Heart left ventricle (tissue), 16 donors: ENCODE measurements at regions of chrX and their contacts with region 1.

Region 1: DNA sequence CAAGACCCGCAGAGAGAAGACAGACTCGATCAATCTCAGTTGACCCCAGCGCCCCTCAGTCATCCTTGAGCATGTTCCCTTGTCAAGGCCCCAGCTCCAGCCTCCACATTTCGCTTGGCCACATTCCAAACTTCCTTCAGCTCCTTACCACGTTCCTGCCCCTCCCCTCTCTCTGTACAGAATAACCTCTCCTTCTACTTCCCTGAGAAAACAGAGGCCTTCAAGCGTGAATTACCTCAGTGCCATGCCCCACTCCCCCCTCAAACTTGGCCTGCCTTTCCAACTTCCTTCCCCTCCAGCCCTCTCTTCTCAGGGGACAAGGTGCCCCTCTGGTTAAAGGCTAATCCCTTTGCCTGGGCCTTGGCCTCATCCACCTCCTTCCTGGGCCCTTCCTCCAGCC is 3.2 kb upstream of the RIPPLY1 start:
- DNase-seq: no peak
- ATAC-seq: no peak
- H3K4me3 ChIP-seq: no peak overlapping the region
- H3K27ac ChIP-seq: no peak overlapping the region
- H3K4me1 ChIP-seq: no peaks in the 10 kb centered on the region
- H3K27me3 ChIP-seq: no peaks in the 10 kb centered on the region
- CTCF ChIP-seq: no peak
- POLR2A ChIP-seq: no peak

Region 2: GRCh38 chrX:106935175-106935574 is 28.8 kb after region 1 on chrX:
- intact Hi-C with region 1: no loop called
- DNase-seq: no peak
- ATAC-seq: no peak
- H3K4me3 ChIP-seq: no peak overlapping the region
- H3K27ac ChIP-seq: no peak overlapping the region
- H3K4me1 ChIP-seq: peaks cover 0 to 6% (median 0%) of the 10 kb centered on the region in 12 donors
- H3K27me3 ChIP-seq: no peaks in the 10 kb centered on the region
- CTCF ChIP-seq: no peak
- POLR2A ChIP-seq: no peak

Region 3: GRCh38 chrX:106952988-106953387 is 46.6 kb after region 1 on chrX:
- intact Hi-C with region 1: loop called in 2 of 10 experiments (anchors 5 to 10 kb)
- DNase-seq: no peak
- ATAC-seq: no peak
- H3K4me3 ChIP-seq: no peak overlapping the region
- H3K27ac ChIP-seq: no peak overlapping the region
- H3K4me1 ChIP-seq: no peaks in the 10 kb centered on the region
- H3K27me3 ChIP-seq: peaks cover 0 to 15% (median 0%) of the 10 kb centered on the region in 9 donors
- CTCF ChIP-seq: peak in 11 of 12 donors; percentile 15 to 45 (median 29)
- POLR2A ChIP-seq: no peak

Region 4: GRCh38 chrX:106999002-106999975 is 92.9 kb after region 1 on chrX:
- intact Hi-C with region 1: no loop called
- DNase-seq: peak; percentile 29 to 60 (median 44)
- ATAC-seq: peak; percentile 57 to 75 (median 70)
- H3K4me3 ChIP-seq: peak overlapping the region; percentile 37 to 85 (median 64)
- H3K27ac ChIP-seq: peak overlapping the region in 9 of 12 donors; percentile 33 to 83 (median 63)
- H3K4me1 ChIP-seq: peaks cover 0 to 8% (median 0%) of the 10 kb centered on the region in 12 donors
- H3K27me3 ChIP-seq: peaks cover 0 to 12% (median 0%) of the 10 kb centered on the region in 9 donors
- CTCF ChIP-seq: peak; percentile 8 to 60 (median 43)
- POLR2A ChIP-seq: no peak